A549 (cell line): ENCODE measurements at regions of chr5 and their contacts with region 1.

Region 1: DNA sequence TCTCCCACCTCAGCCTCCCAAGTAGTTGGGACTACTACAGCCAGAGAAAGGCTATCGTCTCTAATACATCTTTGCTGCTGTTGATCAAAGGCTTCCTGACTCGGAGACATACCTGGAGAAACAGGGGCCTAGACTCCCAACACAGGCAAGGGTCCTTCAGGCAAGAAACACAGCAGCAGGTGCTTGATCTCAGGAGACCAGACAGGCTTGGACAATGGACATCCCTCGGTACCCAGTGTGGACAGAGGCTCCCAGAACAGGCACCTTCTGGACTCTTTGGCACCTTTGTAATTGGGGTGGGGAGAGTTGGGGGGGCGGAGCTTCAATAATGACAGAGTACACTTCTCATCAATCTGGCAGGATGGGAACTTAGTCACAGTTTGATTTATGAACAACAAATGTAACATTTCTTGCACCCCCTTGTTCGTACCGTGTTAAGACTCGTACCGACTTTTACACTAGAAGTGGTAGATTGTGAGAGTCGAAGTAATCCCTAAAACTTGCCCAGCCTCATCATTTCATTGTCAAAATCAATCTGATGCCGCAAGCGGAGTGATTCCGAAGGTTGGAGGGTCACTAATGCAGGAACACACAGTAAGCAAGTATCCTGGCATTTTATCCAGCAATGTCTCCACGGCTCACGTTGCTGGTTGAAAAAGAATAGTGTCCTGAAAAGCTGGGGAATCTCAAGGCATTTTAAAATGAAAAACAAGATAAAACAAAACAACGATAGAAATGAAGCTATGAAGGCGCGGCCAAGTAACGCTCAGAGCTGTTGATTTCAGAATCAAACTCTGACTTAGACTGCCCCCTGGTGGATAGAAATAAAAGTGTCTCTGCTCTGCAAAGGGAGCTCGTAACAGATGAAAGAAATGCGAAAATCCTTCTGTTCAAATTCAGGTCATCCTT is 46.4 kb upstream of the STK32A start:
- DNase-seq: peak; percentile 52 to 59
- ATAC-seq: peak; percentile 87 to 95
- H3K4me3 ChIP-seq: no peak overlapping the region
- H3K27ac ChIP-seq: no peak overlapping the region
- H3K4me1 ChIP-seq: no peaks in the 10 kb centered on the region
- CTCF ChIP-seq: peak; percentile 83
- EP300 ChIP-seq: no peak
- POLR2A ChIP-seq: no peak
- RAD21 ChIP-seq: peak; percentile 75 to 78

Region 2: GRCh38 chr5:146533260-146533857 is 655.1 kb before region 1 on chr5:
- CTCF ChIA-PET with region 1: interaction called, 63 read pairs
- POLR2A ChIA-PET with region 1: no interaction called
- DNase-seq: peak; percentile 69 to 77
- ATAC-seq: peak; percentile 93 to 97
- H3K4me3 ChIP-seq: no peak overlapping the region
- H3K27ac ChIP-seq: no peak overlapping the region
- H3K4me1 ChIP-seq: no peaks in the 10 kb centered on the region
- CTCF ChIP-seq: peak; percentile 86
- EP300 ChIP-seq: no peak
- POLR2A ChIP-seq: no peak
- RAD21 ChIP-seq: peak; percentile 82 to 89

Region 3: GRCh38 chr5:146765089-146765832 is 423.2 kb before region 1 on chr5:
- CTCF ChIA-PET with region 1: no interaction called
- POLR2A ChIA-PET with region 1: no interaction called
- DNase-seq: no peak
- ATAC-seq: no peak
- H3K4me3 ChIP-seq: no peak overlapping the region
- H3K27ac ChIP-seq: no peak overlapping the region
- H3K4me1 ChIP-seq: no peaks in the 10 kb centered on the region
- CTCF ChIP-seq: no peak
- EP300 ChIP-seq: no peak
- POLR2A ChIP-seq: no peak
- RAD21 ChIP-seq: no peak

Region 4: GRCh38 chr5:147203213-147203612 is 14.8 kb after region 1 on chr5:
- CTCF ChIA-PET with region 1: interaction called, 25 read pairs
- POLR2A ChIA-PET with region 1: no interaction called
- DNase-seq: no peak
- ATAC-seq: no peak
- H3K4me3 ChIP-seq: no peak overlapping the region
- H3K27ac ChIP-seq: no peak overlapping the region
- H3K4me1 ChIP-seq: no peaks in the 10 kb centered on the region
- CTCF ChIP-seq: no peak
- EP300 ChIP-seq: no peak
- POLR2A ChIP-seq: no peak
- RAD21 ChIP-seq: no peak